Naive thymus-derived CD8-positive, alpha-beta T cell (primary cell): ENCODE measurements at regions of chr14 and their contacts with region 1.

Region 1: DNA sequence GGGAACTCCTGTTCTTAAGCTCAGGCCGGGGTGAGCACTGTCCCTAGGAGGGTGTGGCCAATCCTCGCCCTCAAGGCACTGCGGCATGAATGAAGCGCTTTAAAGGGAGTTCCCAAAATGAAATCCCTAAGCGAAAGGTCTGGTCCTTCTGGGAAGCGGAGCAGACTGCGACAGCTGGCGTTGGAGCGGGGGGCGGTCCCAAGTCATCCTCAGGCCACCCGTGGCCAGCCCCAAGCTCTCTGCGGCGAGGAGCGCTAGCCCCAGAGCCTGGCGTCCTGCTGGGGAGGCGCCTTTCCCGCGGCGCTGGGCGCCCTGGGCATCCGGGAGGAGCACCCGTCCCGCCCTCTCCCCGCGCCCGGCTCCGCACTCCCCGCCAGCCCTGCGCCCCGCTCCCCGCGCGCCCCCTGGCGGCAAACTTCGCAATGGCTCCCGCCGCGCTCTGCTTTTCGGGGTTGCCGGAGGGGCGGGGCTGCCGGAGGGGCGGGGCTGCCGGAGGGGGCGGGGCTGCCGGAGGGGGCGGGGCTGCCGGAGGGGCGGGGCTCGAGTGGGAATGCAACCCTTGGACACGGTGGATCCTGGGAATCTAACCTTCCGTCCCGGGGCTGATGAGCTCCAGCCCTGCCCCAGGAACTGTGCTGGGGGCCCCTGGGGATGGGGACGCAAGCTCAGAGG is 25.4 kb downstream of the ZBTB42 start:
- DNase-seq: peak; percentile 85 to 100 (median 95)
- ATAC-seq: peak; percentile 87 to 89
- H3K4me3 Mint-ChIP-seq: peak overlapping the region; percentile 78 to 95 (median 87)
- H3K27ac Mint-ChIP-seq: peak overlapping the region in 2 of 10 donors; percentile 37 to 94
- H3K4me1 Mint-ChIP-seq: peaks cover 10 to 24% (median 22%) of the 10 kb centered on the region in 4 donors
- H3K27me3 Mint-ChIP-seq: peaks cover 0 to 8% (median 0%) of the 10 kb centered on the region in 5 donors

Region 2: DNA sequence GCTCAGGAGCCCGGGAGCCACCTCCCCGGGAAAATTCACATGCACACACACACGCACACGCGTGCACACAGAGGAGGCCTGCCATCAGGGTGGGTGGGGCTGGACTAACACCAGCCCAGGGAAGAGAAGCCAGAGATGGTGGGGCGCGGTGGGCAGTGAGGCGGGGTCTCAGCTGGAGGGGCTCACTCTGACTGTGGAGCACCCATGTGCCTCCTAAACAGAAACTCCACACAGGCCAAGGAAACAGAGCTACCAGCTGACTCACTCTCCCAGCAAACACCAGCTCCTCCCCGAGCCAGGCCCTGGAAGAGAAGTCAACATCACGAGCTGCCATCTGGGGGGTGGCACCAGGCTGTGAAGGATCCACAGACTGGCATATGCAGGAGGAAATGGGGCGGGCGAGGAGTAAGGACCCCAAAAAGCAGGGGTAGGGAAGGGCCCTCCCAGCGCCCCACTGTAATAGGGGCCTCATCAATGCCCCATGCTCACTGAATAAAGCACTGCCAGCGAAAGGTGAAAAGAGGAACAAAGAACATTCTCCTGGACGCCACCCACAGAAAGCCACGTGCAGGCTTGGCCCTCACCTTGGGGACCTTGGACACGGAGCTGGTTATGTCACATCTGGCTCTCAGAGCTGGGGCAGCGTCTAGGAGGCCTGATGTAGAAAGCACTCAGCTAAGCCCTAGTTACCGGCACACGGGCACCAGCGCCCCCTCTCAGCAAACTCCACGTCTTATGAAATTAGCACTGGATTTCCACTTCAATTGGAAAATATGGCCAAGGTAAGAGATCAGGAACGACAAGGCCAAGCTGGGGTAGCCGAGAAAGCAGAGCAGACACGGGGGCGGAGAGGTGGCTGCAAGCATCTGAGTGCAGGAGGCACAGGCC is 145.3 kb before region 1 on chr14:
- POLR2A ChIA-PET with region 1: no interaction called
- DNase-seq: no peak
- ATAC-seq: no peak
- H3K4me3 Mint-ChIP-seq: peak overlapping the region in 1 of 10 donors; percentile 20
- H3K27ac Mint-ChIP-seq: peak overlapping the region in 1 of 10 donors; percentile 35
- H3K4me1 Mint-ChIP-seq: peaks cover 12 to 42% (median 27%) of the 10 kb centered on the region in 4 donors
- H3K27me3 Mint-ChIP-seq: no peaks in the 10 kb centered on the region

Region 3: GRCh38 chr14:104752735-104753531 is 73.4 kb before region 1 on chr14 and contains the start of gene SIVA1:
- POLR2A ChIA-PET with region 1: interaction called, 15 read pairs
- DNase-seq: peak; percentile 97 to 100 (median 99)
- ATAC-seq: peak; percentile 89 to 90
- H3K4me3 Mint-ChIP-seq: peak within 1 kb of the TSS; percentile 82 to 96 (median 90)
- H3K27ac Mint-ChIP-seq: peak within 1 kb of the TSS; percentile 75 to 96 (median 95)
- H3K4me1 Mint-ChIP-seq: peaks cover 23 to 55% (median 50%) of the 10 kb centered on the region in 4 donors
- H3K27me3 Mint-ChIP-seq: no peaks in the 10 kb centered on the region
- polyA plus RNA-seq, gene SIVA1: 248 to 297 (median 283) TPM

Region 4: DNA sequence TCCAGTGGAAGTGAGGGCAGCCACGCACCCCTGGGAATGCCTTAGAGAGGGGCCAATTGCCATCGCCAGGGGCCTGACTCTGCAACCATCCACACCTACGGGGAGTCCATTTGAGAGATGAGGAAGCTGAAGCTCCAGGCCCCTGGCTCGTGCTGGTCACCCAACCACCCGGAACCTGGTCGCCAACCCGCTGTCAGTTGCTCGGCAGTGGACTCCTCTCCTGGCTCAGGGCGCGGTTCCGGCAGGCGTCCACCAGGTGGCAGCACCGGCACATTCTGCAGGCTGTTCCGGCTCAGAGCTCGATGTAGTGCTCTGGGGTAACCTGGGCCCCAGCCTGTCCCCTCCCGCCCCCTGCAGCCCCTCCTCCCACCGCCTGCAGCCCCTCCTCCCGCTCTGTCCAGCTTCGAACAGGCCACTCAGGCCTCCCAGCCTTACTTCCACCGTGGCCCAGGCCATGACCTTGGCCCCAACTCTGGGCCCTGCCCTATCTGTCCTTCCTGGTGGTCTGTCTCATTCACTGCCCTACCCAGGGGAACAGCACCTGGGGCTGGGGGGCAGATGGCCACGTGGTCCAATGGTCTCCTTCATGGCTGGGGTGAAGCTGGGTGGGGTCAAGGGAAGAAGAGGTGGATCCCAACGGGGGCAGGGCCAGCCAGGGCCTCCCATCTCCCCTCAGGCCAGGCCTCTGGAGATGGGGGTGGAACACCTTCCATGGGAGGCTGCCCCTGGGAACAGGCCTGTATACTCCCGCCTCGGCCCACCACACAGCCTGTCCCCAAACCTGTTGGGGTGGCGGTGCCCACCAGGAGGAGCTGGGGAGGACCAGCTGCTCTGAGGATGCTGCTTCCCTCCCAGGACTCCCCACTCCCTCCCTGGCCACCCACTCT is 57.6 kb before region 1 on chr14:
- POLR2A ChIA-PET with region 1: interaction called, 21 read pairs
- DNase-seq: peak; percentile 77 to 93 (median 90)
- ATAC-seq: peak; percentile 97 to 98
- H3K4me3 Mint-ChIP-seq: no peak overlapping the region
- H3K27ac Mint-ChIP-seq: peak overlapping the region in 2 of 10 donors; percentile 33 to 80
- H3K4me1 Mint-ChIP-seq: peaks cover 0 to 10% (median 5%) of the 10 kb centered on the region in 4 donors
- H3K27me3 Mint-ChIP-seq: no peaks in the 10 kb centered on the region